ENCODE measurements at regions of chr14 and their contacts with region 1.

Region 1: GRCh38 chr14:31207755-31208545 is at the start of gene HECTD1:
- DNase-seq: peak; percentile 76 to 96 (median 87)
- ATAC-seq: peak; percentile 69
- H3K4me3 ChIP-seq: peak within 1 kb of the TSS; percentile 77
- H3K4me3 Mint-ChIP-seq: peak within 1 kb of the TSS; percentile 93
- H3K27ac ChIP-seq: peak within 1 kb of the TSS; percentile 93 to 95
- H3K27ac Mint-ChIP-seq: peak within 1 kb of the TSS; percentile 97
- H3K4me1 ChIP-seq: peaks cover 40% of the 10 kb centered on the region
- H3K4me1 Mint-ChIP-seq: peaks cover 67% of the 10 kb centered on the region
- H3K27me3 ChIP-seq: no peaks in the 10 kb centered on the region
- H3K27me3 Mint-ChIP-seq: no peaks in the 10 kb centered on the region
- CTCF ChIP-seq: peak; percentile 74
- total RNA-seq, gene HECTD1: 162 to 168 TPM

Region 2: DNA sequence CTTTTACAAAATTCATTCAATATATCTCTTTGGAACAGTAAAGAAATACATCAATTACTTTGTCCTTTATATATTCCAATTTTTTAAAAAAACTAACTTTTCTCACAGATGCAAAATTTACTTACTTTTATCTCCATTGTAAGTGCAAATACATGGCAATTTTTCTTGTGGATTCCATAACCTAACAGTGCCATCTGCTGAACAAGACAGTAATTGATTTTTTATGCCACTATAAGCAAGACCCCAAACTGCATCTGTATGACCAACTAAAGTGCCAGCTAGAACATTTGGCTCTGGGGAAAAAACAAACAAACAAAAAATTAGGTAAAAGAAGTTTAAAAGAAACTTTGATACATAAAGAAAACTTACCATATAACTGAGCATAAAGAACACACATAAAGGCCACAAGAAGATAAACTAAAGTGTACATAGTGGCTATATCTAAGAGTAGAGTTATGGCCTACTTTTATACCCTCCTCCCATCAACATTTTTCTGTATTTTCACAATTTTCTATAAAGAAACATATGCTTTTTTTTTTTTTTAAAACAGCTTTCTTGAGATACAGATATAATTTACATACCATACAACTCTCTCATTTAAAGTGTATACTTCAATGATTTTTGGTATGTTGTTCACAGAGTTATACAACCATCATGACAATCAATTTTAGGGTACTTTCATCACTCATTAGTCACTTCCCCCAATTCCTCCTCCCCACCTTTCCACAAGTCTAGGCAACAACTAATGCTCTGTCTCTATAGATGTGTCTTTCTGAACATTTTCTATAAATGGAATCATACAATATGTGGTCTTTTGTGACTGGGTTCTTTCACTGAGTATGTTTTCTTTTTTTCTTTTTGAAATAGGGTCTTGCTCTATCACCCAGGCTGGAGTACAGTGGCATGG is 300.9 kb before region 1 on chr14:
- CTCF ChIA-PET with region 1: no interaction called
- POLR2A ChIA-PET with region 1: no interaction called
- intact Hi-C with region 1: no loop called
- DNase-seq: peak in 3 of 14 experiments; percentile 8 to 20 (median 18)
- ATAC-seq: no peak
- H3K4me3 ChIP-seq: no peak overlapping the region
- H3K4me3 Mint-ChIP-seq: no peak overlapping the region
- H3K27ac ChIP-seq: no peak overlapping the region
- H3K27ac Mint-ChIP-seq: no peak overlapping the region
- H3K4me1 ChIP-seq: no peaks in the 10 kb centered on the region
- H3K4me1 Mint-ChIP-seq: no peaks in the 10 kb centered on the region
- H3K27me3 ChIP-seq: no peaks in the 10 kb centered on the region
- H3K27me3 Mint-ChIP-seq: no peaks in the 10 kb centered on the region
- CTCF ChIP-seq: no peak

Region 3: DNA sequence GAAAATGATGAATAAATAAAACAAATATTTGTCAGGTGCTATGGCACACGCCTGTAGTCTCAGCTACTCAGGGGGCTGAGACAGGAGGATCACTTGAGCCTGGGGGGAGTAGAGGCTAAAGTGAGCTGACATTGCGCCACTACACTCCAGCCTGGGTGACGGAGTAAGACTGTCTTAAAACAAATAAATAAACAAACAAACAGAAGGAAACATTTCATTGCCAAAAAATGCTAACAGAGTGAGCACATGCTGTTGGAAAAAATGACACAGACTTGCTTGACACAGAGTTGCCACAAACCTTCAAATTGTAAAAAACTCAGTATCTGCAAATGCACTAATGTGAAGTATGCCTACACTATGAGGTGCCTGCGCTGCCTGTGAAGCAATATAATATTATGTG is 233.3 kb before region 1 on chr14:
- CTCF ChIA-PET with region 1: no interaction called
- POLR2A ChIA-PET with region 1: no interaction called
- intact Hi-C with region 1: loop called in 1 of 2 experiments (anchors 5 kb)
- DNase-seq: no peak
- ATAC-seq: no peak
- H3K4me3 ChIP-seq: no peak overlapping the region
- H3K4me3 Mint-ChIP-seq: no peak overlapping the region
- H3K27ac ChIP-seq: no peak overlapping the region
- H3K27ac Mint-ChIP-seq: no peak overlapping the region
- H3K4me1 ChIP-seq: peaks cover 11% of the 10 kb centered on the region
- H3K4me1 Mint-ChIP-seq: peaks cover 70% of the 10 kb centered on the region
- H3K27me3 ChIP-seq: no peaks in the 10 kb centered on the region
- H3K27me3 Mint-ChIP-seq: no peaks in the 10 kb centered on the region
- CTCF ChIP-seq: no peak

Region 4: DNA sequence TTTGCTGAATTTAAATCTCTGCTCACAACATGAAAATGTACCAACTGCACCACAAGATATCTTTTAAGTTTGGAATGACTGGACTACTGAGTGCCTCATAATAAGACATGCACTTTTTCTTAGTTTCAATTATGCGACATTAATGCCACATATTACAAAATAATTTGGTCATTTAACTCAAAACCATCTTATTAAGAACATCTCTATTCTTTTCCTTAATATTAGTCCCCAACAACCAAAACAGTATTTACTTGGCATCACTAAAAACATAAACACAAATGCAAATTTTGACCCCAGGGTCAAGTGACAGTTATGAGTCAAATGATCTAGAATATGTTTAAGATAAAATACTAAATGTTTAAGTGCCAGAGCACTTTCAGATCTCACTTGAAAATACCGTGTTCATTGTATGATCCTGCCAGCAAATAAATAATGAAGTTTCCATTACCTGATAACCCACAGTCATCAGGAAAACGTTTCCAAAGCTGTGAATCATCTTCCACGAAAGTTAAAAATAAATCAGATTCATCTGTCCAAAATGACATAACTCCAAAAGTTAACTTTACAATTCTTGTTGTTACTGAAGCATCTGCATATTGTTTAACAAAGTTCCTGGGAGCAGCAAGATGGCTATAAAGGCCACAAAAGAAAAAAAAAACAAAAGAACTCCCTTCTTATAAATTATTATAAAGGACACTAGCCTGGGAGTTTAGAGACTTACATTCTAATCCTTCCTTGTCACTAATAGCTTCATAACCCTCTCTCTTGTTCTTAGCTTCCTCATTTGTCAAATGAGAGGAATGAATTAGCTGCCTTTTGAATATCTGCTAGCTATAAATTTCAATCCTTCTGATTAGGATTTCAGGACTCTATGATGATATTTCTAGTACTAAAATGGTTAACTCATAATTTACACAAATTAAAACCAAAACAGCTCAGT is 213.0 kb before region 1 on chr14:
- CTCF ChIA-PET with region 1: no interaction called
- POLR2A ChIA-PET with region 1: no interaction called
- intact Hi-C with region 1: no loop called
- DNase-seq: no peak
- ATAC-seq: no peak
- H3K4me3 ChIP-seq: no peak overlapping the region
- H3K4me3 Mint-ChIP-seq: no peak overlapping the region
- H3K27ac ChIP-seq: no peak overlapping the region
- H3K27ac Mint-ChIP-seq: peak overlapping the region; percentile 11
- H3K4me1 ChIP-seq: peaks cover 17% of the 10 kb centered on the region
- H3K4me1 Mint-ChIP-seq: peaks cover 69% of the 10 kb centered on the region
- H3K27me3 ChIP-seq: no peaks in the 10 kb centered on the region
- H3K27me3 Mint-ChIP-seq: no peaks in the 10 kb centered on the region
- CTCF ChIP-seq: no peak

Region 5: DNA sequence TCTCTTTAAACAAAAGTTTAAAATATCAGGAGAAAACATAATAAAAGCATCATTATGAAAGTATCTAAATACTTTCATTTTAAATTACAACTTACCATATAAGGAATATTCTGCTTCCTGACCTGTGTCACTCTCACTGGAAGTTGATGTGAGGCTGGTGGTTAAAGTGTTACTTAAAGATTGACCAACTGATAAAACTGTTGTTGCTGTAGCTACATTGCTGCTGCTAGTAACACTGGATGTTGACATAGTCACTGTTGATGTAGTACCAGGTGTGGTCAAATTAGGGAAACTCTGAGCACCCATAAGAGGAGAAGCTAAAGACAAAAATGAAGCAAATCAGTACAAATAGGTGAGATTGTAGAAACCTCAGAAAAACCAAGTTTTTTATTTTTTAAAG is 80.3 kb before region 1 on chr14:
- CTCF ChIA-PET with region 1: interaction called, 6 read pairs
- POLR2A ChIA-PET with region 1: interaction called, 20 read pairs
- intact Hi-C with region 1: loop called in 1 of 2 experiments (anchors 2 kb)
- DNase-seq: peak in 5 of 14 experiments; percentile 9 to 92 (median 83)
- ATAC-seq: peak; percentile 80
- H3K4me3 ChIP-seq: no peak overlapping the region
- H3K4me3 Mint-ChIP-seq: peak overlapping the region; percentile 21
- H3K27ac ChIP-seq: peak overlapping the region in 1 of 2 donors; percentile 19
- H3K27ac Mint-ChIP-seq: peak overlapping the region; percentile 34
- H3K4me1 ChIP-seq: peaks cover 20% of the 10 kb centered on the region
- H3K4me1 Mint-ChIP-seq: peaks cover 51% of the 10 kb centered on the region
- H3K27me3 ChIP-seq: no peaks in the 10 kb centered on the region
- H3K27me3 Mint-ChIP-seq: no peaks in the 10 kb centered on the region
- CTCF ChIP-seq: no peak

Region 6: GRCh38 chr14:31291210-31291609 is 83.3 kb after region 1 on chr14:
- CTCF ChIA-PET with region 1: no interaction called
- POLR2A ChIA-PET with region 1: no interaction called
- intact Hi-C with region 1: loop called in 1 of 2 experiments (anchors 5 kb)
- DNase-seq: no peak
- ATAC-seq: no peak
- H3K4me3 ChIP-seq: no peak overlapping the region
- H3K4me3 Mint-ChIP-seq: no peak overlapping the region
- H3K27ac ChIP-seq: no peak overlapping the region
- H3K27ac Mint-ChIP-seq: no peak overlapping the region
- H3K4me1 ChIP-seq: no peaks in the 10 kb centered on the region
- H3K4me1 Mint-ChIP-seq: no peaks in the 10 kb centered on the region
- H3K27me3 ChIP-seq: no peaks in the 10 kb centered on the region
- H3K27me3 Mint-ChIP-seq: no peaks in the 10 kb centered on the region
- CTCF ChIP-seq: no peak

Region 7: DNA sequence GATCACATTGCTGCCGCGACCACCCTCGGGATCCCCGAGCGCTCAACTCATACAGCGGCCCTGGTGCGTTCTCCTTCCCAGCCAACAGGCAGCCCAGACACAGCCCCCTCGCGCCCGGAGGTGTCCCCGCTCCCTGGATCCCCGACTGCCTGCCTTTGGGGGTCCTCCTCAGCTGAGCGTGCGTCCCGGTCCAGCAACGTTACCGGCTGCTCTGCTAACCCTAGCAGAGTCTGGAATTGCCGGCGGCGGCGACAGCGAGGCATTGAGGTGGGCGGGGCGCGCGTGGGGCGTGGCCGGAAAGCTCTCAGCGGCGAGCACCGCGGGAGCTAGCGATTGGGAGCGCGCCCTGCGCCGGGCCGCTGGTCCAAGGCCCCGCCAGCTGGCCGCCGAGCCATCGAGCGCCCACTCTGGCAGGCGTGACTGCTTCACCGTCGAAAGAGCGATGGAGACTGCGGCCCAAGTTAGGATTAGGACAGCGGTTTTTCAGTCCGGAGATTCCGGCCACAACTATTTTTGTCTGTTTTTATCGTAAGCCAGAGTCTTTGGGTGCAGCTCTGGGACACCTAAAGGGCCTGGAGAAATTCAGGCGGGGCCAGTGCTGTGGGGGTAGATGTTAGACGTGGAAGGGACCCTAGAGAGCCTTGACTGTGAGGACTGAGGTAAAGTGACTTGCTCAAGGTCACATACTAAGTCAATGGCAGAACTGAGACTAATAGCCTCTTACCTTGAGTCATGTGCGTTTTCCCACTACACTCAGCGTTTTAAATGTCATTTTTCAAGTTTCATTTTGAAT is 212.6 kb after region 1 on chr14 and contains the start of gene HEATR5A:
- CTCF ChIA-PET with region 1: interaction called, 15 read pairs
- POLR2A ChIA-PET with region 1: interaction called, 54 read pairs
- intact Hi-C with region 1: loop called (anchors 5 kb)
- DNase-seq: peak; percentile 83 to 96 (median 93)
- ATAC-seq: peak; percentile 96
- H3K4me3 ChIP-seq: peak within 1 kb of the TSS; percentile 99
- H3K4me3 Mint-ChIP-seq: peak within 1 kb of the TSS; percentile 99
- H3K27ac ChIP-seq: peak within 1 kb of the TSS in 1 of 2 donors; percentile 64
- H3K27ac Mint-ChIP-seq: peak within 1 kb of the TSS; percentile 89
- H3K4me1 ChIP-seq: peaks cover 4% of the 10 kb centered on the region
- H3K4me1 Mint-ChIP-seq: peaks cover 33% of the 10 kb centered on the region
- H3K27me3 ChIP-seq: no peaks in the 10 kb centered on the region
- H3K27me3 Mint-ChIP-seq: no peaks in the 10 kb centered on the region
- CTCF ChIP-seq: peak; percentile 29
- total RNA-seq, gene HEATR5A: 5.2 to 5.5 TPM

Region 8: GRCh38 chr14:31441271-31442110 is 233.5 kb after region 1 on chr14:
- CTCF ChIA-PET with region 1: no interaction called
- POLR2A ChIA-PET with region 1: no interaction called
- intact Hi-C with region 1: no loop called
- DNase-seq: no peak
- ATAC-seq: no peak
- H3K4me3 ChIP-seq: no peak overlapping the region
- H3K4me3 Mint-ChIP-seq: no peak overlapping the region
- H3K27ac ChIP-seq: no peak overlapping the region
- H3K27ac Mint-ChIP-seq: no peak overlapping the region
- H3K4me1 ChIP-seq: no peaks in the 10 kb centered on the region
- H3K4me1 Mint-ChIP-seq: no peaks in the 10 kb centered on the region
- H3K27me3 ChIP-seq: no peaks in the 10 kb centered on the region
- H3K27me3 Mint-ChIP-seq: no peaks in the 10 kb centered on the region
- CTCF ChIP-seq: no peak

Region 9: GRCh38 chr14:32076278-32077080 is 868.5 kb after region 1 on chr14:
- CTCF ChIA-PET with region 1: interaction called, 3 read pairs
- POLR2A ChIA-PET with region 1: interaction called, 13 read pairs
- intact Hi-C with region 1: loop called (anchors 5 kb)
- DNase-seq: peak; percentile 59 to 91 (median 73)
- ATAC-seq: peak; percentile 55
- H3K4me3 ChIP-seq: peak overlapping the region; percentile 92
- H3K4me3 Mint-ChIP-seq: peak overlapping the region; percentile 96
- H3K27ac ChIP-seq: peak overlapping the region; percentile 57 to 75
- H3K27ac Mint-ChIP-seq: peak overlapping the region; percentile 89
- H3K4me1 ChIP-seq: peaks cover 6% of the 10 kb centered on the region
- H3K4me1 Mint-ChIP-seq: peaks cover 44% of the 10 kb centered on the region
- H3K27me3 ChIP-seq: no peaks in the 10 kb centered on the region
- H3K27me3 Mint-ChIP-seq: no peaks in the 10 kb centered on the region
- CTCF ChIP-seq: no peak

Measured in CD4-positive, alpha-beta T cell (primary cell).